ENCODE measurements at regions of chr1 and their contacts with region 1.

Region 1: GRCh38 chr1:222464841-222465210 is 83.1 kb downstream of the HHIPL2 start:
- DNase-seq: peak; percentile 52 to 81 (median 69)
- H3K4me3 ChIP-seq: peak overlapping the region; percentile 26 to 66 (median 60)
- H3K27ac ChIP-seq: peak overlapping the region; percentile 58 to 81
- H3K4me1 ChIP-seq: no peaks in the 10 kb centered on the region
- H3K27me3 ChIP-seq: no peaks in the 10 kb centered on the region
- CTCF ChIP-seq: no peak

Region 2: DNA sequence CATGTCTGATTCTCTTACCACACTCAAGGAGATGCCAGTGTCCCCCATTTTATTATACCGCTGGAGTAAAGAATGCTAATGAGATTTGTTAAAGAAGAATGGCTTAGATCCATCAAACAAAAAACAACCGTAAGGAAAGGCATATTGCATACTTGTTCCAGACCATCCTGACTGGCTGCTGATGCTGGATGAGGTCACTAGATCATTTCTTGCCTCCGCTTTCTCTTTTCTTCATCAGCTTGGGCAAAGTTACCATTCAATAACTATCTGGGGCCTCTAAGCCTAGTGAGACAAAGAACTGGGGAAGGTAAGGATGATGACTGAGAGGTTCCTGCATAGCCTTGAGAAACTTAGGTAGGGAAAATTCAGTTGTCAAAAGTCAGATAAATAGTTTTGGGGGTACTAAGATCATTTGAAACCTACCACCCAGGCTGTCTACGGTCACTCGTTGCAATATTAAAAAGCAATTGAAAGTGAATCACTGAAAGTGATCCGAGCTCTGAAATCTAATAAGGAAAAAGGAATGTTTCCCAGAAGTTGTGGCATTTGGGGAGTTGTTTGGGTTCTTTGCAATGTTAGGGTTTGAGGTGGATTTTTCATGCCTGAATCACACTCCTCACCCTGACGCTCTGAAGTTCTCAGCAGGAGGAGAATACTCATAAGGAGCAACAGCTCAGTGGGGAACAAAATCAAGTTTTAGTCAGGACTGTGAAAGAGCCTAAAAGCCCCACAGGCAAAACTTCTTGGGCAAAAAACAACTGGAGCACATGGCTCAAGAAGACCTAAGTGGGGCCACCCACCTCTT is 93.7 kb before region 1 on chr1:
- intact Hi-C with region 1: no loop called
- DNase-seq: no peak
- H3K4me3 ChIP-seq: no peak overlapping the region
- H3K27ac ChIP-seq: no peak overlapping the region
- H3K4me1 ChIP-seq: no peaks in the 10 kb centered on the region
- H3K27me3 ChIP-seq: no peaks in the 10 kb centered on the region
- CTCF ChIP-seq: no peak

Region 3: GRCh38 chr1:222570837-222571236 is 106.0 kb after region 1 on chr1:
- intact Hi-C with region 1: no loop called
- DNase-seq: no peak
- H3K4me3 ChIP-seq: no peak overlapping the region
- H3K27ac ChIP-seq: no peak overlapping the region
- H3K4me1 ChIP-seq: no peaks in the 10 kb centered on the region
- H3K27me3 ChIP-seq: no peaks in the 10 kb centered on the region
- CTCF ChIP-seq: no peak

Region 4: DNA sequence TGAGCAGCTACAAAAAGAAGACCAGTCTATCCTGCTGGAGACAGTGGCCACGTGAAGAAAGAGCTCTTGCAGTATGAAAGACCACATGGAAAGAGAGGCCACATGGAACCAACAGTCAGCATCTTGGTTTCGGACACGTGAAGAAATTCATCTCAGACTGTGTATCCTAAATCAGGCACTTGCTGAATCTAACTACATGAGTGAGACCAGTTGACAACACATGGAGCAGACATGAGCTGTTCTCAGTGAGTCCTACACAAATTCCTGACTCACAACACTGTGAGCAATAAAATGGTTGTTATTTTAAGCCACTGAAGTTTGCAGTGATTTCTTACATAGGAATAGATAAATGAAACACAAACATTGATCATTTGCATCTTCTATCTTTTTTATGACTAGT is 127.3 kb after region 1 on chr1:
- intact Hi-C with region 1: no loop called
- DNase-seq: no peak
- H3K4me3 ChIP-seq: no peak overlapping the region
- H3K27ac ChIP-seq: no peak overlapping the region
- H3K4me1 ChIP-seq: peaks cover 2 to 7% (median 7%) of the 10 kb centered on the region in 3 donors
- H3K27me3 ChIP-seq: no peaks in the 10 kb centered on the region
- CTCF ChIP-seq: no peak

Region 5: DNA sequence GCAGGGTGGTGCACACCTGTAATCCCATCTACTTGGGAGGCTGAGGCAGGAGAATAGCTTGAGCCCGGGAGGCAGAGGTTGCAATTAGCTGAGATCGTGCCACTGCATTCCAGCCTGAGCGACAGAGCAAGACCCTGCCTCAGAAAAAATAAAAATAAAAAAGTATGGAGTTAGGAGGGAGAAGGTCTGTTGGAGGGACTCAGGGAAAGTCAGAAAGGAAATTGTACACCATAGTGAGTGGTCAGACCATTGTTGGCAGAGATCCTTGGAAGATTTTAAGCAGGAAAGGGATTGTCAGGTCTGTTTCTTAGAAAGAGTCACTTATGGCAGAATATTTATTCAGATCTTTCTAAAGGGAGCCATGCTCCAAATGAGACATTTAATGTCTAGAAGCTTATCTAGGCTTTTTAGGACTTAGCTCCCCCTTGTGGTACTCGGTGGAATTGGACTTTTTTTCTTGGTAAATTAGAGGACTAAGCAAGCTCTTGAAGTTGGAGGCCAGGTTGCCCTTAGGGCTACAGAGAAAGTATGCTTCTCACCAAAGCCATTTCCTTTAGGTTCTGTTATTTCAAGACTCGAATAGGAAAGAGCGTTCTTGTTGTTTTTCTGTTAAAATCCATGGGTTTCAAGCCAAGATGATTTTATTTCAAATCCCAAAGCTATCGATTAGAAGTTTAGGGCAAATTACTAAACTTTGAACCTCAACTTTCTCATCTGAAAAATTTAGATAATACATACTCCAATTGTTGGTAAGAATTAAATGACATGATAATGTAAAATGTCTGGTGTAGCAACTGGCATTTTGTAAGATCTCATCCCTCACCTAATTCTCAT is 169.6 kb after region 1 on chr1:
- intact Hi-C with region 1: loop called (anchors 5 kb)
- DNase-seq: peak in 4 of 5 donors; percentile 50 to 95 (median 82)
- H3K4me3 ChIP-seq: no peak overlapping the region
- H3K27ac ChIP-seq: no peak overlapping the region
- H3K4me1 ChIP-seq: no peaks in the 10 kb centered on the region
- H3K27me3 ChIP-seq: no peaks in the 10 kb centered on the region
- CTCF ChIP-seq: peak; percentile 81